Cardiac septum (tissue), 1 donor: ENCODE measurements at regions of chr19 and their contacts with region 1.

Region 1: DNA sequence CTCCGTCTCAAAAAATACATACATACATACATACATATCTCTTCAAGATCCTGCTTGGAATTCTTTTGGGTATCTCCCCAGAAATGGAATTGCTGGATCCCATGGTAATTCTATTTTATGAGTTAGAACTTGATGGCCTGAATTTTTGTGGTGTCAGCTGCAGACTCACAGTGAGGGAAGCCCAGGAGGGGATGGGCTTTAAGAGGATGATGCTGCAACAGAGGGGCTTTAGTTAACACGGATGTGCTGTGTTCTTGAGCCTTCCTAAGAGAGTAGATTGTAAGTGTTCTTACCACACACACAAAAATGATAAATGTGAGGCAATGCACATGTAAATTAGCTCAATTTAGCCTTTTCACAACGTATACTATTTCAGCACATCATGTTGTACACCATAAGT is 31.8 kb downstream of the CACNG6 start:
- DNase-seq: no peak

Region 2: DNA sequence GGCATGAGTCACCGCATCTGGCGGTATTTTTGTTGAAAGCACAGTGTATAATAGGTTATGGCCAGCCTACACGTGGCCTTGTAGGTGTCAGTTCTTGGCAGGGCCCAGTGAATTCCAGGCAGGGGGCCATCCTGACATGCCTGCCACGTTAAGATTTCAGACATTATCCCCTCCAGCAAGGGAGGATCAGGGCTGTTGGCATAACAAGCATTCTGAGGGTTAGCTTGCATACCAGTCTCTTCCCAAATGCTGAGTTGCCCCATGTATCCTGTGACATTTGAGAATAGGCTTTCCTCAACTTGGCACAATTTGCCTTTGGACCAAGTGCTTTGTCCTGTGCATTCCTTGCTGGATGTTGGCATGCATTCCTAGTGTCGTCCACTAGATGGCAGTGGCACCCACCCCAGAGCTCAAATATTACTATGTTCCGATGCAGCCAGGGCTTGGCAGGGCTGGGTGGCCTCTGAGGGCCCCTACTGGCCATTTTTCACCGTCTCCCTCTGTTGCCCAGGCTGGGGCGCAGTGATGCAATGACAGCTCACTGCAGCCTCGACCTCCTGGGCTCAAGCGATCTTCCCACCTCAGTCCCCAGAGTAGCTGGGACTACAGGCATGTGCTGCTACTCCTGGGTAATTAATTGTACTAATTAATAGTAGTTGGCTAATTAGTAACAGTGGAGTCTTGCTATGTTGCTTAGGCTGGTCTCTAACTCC is 230.3 kb before region 1 on chr19:
- intact Hi-C with region 1: loop called (anchors 5 kb)
- DNase-seq: peak; percentile 92

Region 3: DNA sequence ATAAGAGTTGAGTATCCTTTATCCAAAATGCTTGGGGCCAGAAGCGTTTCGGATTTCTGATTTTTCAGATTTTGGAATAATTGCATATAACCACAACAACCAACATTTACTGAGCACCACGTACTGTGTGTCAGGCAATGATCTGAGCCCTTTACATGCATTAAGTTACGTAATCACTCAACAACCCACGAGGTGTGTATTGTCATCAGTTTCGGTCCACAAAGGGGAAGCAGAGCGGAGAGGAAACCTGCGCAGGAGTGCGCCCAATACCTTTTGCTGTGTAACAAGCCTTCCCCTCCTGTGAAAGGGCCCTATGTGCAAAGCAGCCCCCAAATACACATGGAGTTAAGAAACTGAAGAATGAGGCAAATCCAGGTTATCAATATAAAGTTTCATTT is 178.3 kb before region 1 on chr19:
- intact Hi-C with region 1: loop called (anchors 2 kb)
- DNase-seq: peak; percentile 80

Region 4: GRCh38 chr19:53906211-53907192 is 116.7 kb before region 1 on chr19:
- intact Hi-C with region 1: loop called (anchors 2 kb)
- DNase-seq: peak; percentile 86

Region 5: GRCh38 chr19:53961523-53962356 is 61.5 kb before region 1 on chr19:
- intact Hi-C with region 1: no loop called
- DNase-seq: no peak

Region 6: DNA sequence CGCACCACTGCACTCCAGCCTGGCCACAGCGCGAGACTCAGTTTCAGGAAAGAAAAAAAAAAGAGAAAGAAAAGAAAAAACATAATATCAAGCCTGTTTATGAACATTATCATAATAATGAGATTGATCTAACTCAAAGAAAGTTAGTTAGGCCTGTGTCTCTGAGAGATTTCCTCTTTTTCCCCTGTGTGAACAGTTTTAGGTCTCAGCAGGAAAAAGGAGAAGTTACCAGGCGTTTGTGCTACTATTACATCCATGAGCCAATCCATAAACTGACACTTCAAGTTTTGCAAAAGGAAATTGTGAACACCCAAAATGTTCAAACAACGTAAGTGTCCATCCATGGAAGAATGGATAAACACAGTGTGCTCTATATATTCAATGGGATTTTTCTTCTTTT is 54.1 kb after region 1 on chr19:
- intact Hi-C with region 1: no loop called
- DNase-seq: no peak